ENCODE measurements at regions of chr20 and their contacts with region 1.

Region 1: GRCh38 chr20:10090588-10091166 is 55.9 kb downstream of the ANKEF1 start:
- DNase-seq: peak in 2 of 3 donors; percentile 34 to 69
- ATAC-seq: peak; percentile 77 to 86
- H3K4me3 ChIP-seq: no peak overlapping the region
- H3K27ac ChIP-seq: no peak overlapping the region
- H3K4me1 ChIP-seq: no peaks in the 10 kb centered on the region
- H3K27me3 ChIP-seq: no peaks in the 10 kb centered on the region

Region 2: GRCh38 chr20:9616833-9617489 is 473.7 kb before region 1 on chr20:
- intact Hi-C with region 1: loop called in 1 of 4 experiments (anchors 10 kb)
- DNase-seq: peak; percentile 48 to 71 (median 66)
- ATAC-seq: peak; percentile 72 to 75
- H3K4me3 ChIP-seq: no peak overlapping the region
- H3K27ac ChIP-seq: no peak overlapping the region
- H3K4me1 ChIP-seq: no peaks in the 10 kb centered on the region
- H3K27me3 ChIP-seq: no peaks in the 10 kb centered on the region

Region 3: GRCh38 chr20:9978397-9979004 is 112.2 kb before region 1 on chr20:
- intact Hi-C with region 1: loop called in 3 of 4 experiments (anchors 2 to 5 kb)
- DNase-seq: peak in 1 of 3 donors; percentile 7
- ATAC-seq: peak; percentile 90 to 93
- H3K4me3 ChIP-seq: no peak overlapping the region
- H3K27ac ChIP-seq: no peak overlapping the region
- H3K4me1 ChIP-seq: no peaks in the 10 kb centered on the region
- H3K27me3 ChIP-seq: no peaks in the 10 kb centered on the region

Region 4: DNA sequence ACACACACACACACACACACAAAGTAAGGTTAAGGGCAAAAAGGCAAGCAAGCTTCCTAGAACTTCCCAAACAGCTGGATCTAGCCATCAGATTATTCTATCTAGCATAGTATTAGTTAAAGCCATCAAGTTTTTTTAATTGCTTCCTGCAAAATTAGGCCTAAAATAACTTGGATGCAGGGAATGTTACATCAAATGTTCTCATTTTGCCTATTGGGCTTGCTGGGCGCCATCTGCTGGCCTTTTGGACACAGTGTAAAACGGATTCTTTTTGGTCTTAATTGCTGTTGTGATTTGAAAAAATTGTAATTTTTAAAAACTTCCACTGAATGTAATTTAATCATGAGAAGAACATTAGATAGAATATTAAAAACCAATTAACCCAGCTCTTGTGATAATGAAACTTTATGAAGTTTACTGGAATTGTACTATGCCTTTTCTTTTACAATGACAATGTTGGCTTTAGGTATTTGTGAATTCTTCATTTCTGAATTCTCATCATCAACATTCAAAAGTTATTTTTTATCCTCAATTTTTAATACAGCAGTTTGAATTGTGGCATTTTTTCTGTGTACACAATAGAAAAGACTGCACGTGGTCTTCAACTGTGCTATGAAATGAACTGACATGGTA is 336.5 kb after region 1 on chr20:
- intact Hi-C with region 1: loop called in 1 of 4 experiments (anchors 5 kb)
- DNase-seq: peak; percentile 56 to 86 (median 75)
- ATAC-seq: peak in 1 of 2 donors; percentile 63
- H3K4me3 ChIP-seq: no peak overlapping the region
- H3K27ac ChIP-seq: no peak overlapping the region
- H3K4me1 ChIP-seq: peaks cover 7% of the 10 kb centered on the region
- H3K27me3 ChIP-seq: no peaks in the 10 kb centered on the region

Measured in right cardiac atrium (tissue), 5 donors.